ENCODE measurements at regions of chr6 and their contacts with region 1.

Region 1: DNA sequence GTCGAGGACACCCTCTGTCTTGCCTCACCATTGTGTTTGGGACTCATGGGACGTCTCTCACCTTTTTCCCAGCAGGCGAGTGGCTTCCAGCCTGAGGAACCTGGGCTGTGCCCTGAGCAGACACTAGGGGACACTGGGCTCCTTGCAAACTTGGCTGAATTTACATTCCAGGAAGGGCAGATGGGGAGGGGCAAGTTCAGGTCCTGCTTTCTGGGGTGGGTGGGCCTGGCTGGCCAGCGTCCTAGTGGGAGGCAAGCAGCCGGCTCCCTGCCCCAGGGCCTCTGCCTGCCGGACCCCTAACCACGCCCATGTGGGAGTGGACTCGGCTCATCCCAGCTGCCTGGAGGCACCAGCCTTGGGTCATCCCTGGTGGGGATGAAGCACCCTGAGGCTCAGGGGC is 48.2 kb upstream of the MLN start:
- DNase-seq: peak in 1 of 5 donors; percentile 13
- ATAC-seq: peak in 3 of 4 donors; percentile 35 to 61 (median 53)
- H3K4me3 ChIP-seq: no peak overlapping the region
- H3K27ac ChIP-seq: no peak overlapping the region
- H3K4me1 ChIP-seq: peaks cover 0 to 8% (median 0%) of the 10 kb centered on the region in 12 donors
- H3K27me3 ChIP-seq: peaks cover 0 to 53% (median 13%) of the 10 kb centered on the region in 9 donors
- CTCF ChIP-seq: peak in 8 of 12 donors; percentile 26 to 51 (median 35)
- POLR2A ChIP-seq: no peak

Region 2: GRCh38 chr6:33091957-33092356 is 760.0 kb before region 1 on chr6:
- intact Hi-C with region 1: no loop called
- DNase-seq: peak in 1 of 5 donors; percentile 75
- ATAC-seq: peak in 3 of 4 donors; percentile 20 to 54 (median 54)
- H3K4me3 ChIP-seq: no peak overlapping the region
- H3K27ac ChIP-seq: no peak overlapping the region
- H3K4me1 ChIP-seq: peaks cover 0 to 6% (median 0%) of the 10 kb centered on the region in 12 donors
- H3K27me3 ChIP-seq: peaks cover 0 to 11% (median 0%) of the 10 kb centered on the region in 9 donors
- CTCF ChIP-seq: peak in 11 of 12 donors; percentile 18 to 64 (median 53)
- POLR2A ChIP-seq: no peak

Region 3: DNA sequence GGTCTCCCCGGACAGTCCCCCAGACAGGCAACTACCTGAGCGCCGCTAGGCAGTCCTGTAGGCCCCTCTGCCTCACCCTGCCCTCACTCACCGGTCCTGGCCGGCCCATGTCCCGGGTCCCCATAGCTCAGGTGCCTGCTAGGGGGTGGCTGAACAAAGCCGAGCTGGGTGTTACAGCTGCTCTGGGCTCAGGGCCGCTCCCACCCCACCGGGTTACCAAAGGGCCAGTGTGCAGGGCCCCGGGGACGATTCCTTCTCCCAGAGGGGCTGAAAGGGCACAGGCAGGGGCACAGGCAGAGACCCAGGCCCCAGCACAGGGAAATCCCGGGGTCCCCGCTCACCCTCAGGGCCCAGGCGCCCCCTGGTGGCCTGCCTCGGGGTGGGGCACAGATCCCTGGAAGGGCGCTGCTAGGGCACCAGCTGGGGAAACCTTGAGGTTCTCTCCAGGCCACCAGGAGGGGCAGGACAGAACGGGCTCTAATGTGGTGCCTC is 175.5 kb after region 1 on chr6:
- intact Hi-C with region 1: loop called in 5 of 10 experiments (anchors 2 to 10 kb)
- DNase-seq: peak; percentile 24 to 75 (median 39)
- ATAC-seq: peak in 3 of 4 donors; percentile 44 to 76 (median 61)
- H3K4me3 ChIP-seq: no peak overlapping the region
- H3K27ac ChIP-seq: no peak overlapping the region
- H3K4me1 ChIP-seq: no peaks in the 10 kb centered on the region
- H3K27me3 ChIP-seq: peaks cover 0 to 49% (median 6%) of the 10 kb centered on the region in 9 donors
- CTCF ChIP-seq: peak; percentile 57 to 87 (median 72)
- POLR2A ChIP-seq: no peak

Region 4: GRCh38 chr6:34358389-34358905 is 506.5 kb after region 1 on chr6:
- intact Hi-C with region 1: no loop called
- DNase-seq: no peak
- ATAC-seq: peak in 3 of 4 donors; percentile 28 to 47 (median 42)
- H3K4me3 ChIP-seq: no peak overlapping the region
- H3K27ac ChIP-seq: no peak overlapping the region
- H3K4me1 ChIP-seq: peaks cover 0 to 68% (median 26%) of the 10 kb centered on the region in 12 donors
- H3K27me3 ChIP-seq: no peaks in the 10 kb centered on the region
- CTCF ChIP-seq: no peak
- POLR2A ChIP-seq: no peak

Region 5: GRCh38 chr6:34867484-34867883 is 1015.5 kb after region 1 on chr6:
- intact Hi-C with region 1: no loop called
- DNase-seq: no peak
- ATAC-seq: peak; percentile 30 to 63 (median 49)
- H3K4me3 ChIP-seq: no peak overlapping the region
- H3K27ac ChIP-seq: peak overlapping the region in 6 of 12 donors; percentile 17 to 58 (median 40)
- H3K4me1 ChIP-seq: peaks cover 0 to 35% (median 9%) of the 10 kb centered on the region in 12 donors
- H3K27me3 ChIP-seq: no peaks in the 10 kb centered on the region
- CTCF ChIP-seq: peak in 8 of 12 donors; percentile 18 to 43 (median 26)
- POLR2A ChIP-seq: no peak

Measured in heart left ventricle (tissue), 16 donors.